ENCODE measurements at regions of chr5 and their contacts with region 1.

Region 1: GRCh38 chr5:122192497-122193496 is 63.5 kb downstream of the ZNF474 start:
- DNase-seq: peak; percentile 22
- H3K4me3 ChIP-seq: no peak overlapping the region
- H3K27ac ChIP-seq: no peak overlapping the region; a peak in 1 of 4 replicates
- H3K4me1 ChIP-seq: peaks cover 0 to 6% of the 10 kb centered on the region in 2 experiments; a peak in 2 of 4 replicates
- H3K27me3 ChIP-seq: no peaks in the 10 kb centered on the region
- CTCF ChIP-seq: peak; percentile 69
- EP300 ChIP-seq: no peak
- RAD21 ChIP-seq: peak; percentile 79

Region 2: GRCh38 chr5:122415030-122415800 is 222.4 kb after region 1 on chr5:
- CTCF ChIA-PET with region 1: interaction called, 212 read pairs
- POLR2A ChIA-PET with region 1: no interaction called
- DNase-seq: peak; percentile 55
- H3K4me3 ChIP-seq: no peak overlapping the region
- H3K27ac ChIP-seq: no peak overlapping the region; a peak in 1 of 4 replicates
- H3K4me1 ChIP-seq: peaks cover 0 to 6% of the 10 kb centered on the region in 2 experiments; a peak in 1 of 4 replicates
- H3K27me3 ChIP-seq: no peaks in the 10 kb centered on the region
- CTCF ChIP-seq: peak; percentile 62
- EP300 ChIP-seq: no peak
- RAD21 ChIP-seq: peak; percentile 98

Region 3: GRCh38 chr5:122421374-122422079 is 228.7 kb after region 1 on chr5:
- CTCF ChIA-PET with region 1: interaction called, 212 read pairs
- POLR2A ChIA-PET with region 1: no interaction called
- DNase-seq: no peak
- H3K4me3 ChIP-seq: no peak overlapping the region
- H3K27ac ChIP-seq: no peak overlapping the region; a peak in 1 of 4 replicates
- H3K4me1 ChIP-seq: peaks cover 0 to 7% of the 10 kb centered on the region in 2 experiments; a peak in 1 of 4 replicates
- H3K27me3 ChIP-seq: no peaks in the 10 kb centered on the region
- CTCF ChIP-seq: no peak
- EP300 ChIP-seq: no peak
- RAD21 ChIP-seq: no peak

Region 4: DNA sequence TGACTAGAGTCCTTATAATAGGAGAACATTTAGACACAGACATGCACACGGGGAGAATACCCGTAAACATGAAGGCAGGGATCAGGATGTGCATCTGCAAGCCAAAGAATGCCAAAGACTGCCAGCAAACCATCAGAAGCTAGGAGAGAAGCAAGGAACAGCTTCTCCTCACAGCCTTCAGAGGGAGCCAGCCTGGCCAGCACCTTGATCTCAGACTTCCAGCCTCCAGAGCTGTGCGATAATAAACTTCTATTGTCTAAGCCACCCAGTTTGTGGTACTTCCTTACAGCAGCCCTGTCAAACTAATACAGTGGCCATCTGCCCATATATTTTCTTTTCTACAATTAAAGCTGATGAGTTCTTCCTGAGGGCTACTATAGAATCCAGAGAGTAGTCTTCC is 254.2 kb after region 1 on chr5:
- CTCF ChIA-PET with region 1: interaction called, 13 read pairs
- POLR2A ChIA-PET with region 1: no interaction called
- DNase-seq: no peak
- H3K4me3 ChIP-seq: no peak overlapping the region
- H3K27ac ChIP-seq: no peak overlapping the region
- H3K4me1 ChIP-seq: peaks cover 0 to 2% of the 10 kb centered on the region in 2 experiments; a peak in 1 of 4 replicates
- H3K27me3 ChIP-seq: no peaks in the 10 kb centered on the region
- CTCF ChIP-seq: no peak
- EP300 ChIP-seq: no peak
- RAD21 ChIP-seq: no peak

Region 5: GRCh38 chr5:122500245-122501075 is 307.7 kb after region 1 on chr5:
- CTCF ChIA-PET with region 1: interaction called, 226 read pairs
- POLR2A ChIA-PET with region 1: no interaction called
- DNase-seq: peak; percentile 59
- H3K4me3 ChIP-seq: no peak overlapping the region; a peak in 1 of 4 replicates
- H3K27ac ChIP-seq: no peak overlapping the region
- H3K4me1 ChIP-seq: peaks cover 0 to 8% of the 10 kb centered on the region in 2 experiments; a peak in 2 of 4 replicates
- H3K27me3 ChIP-seq: no peaks in the 10 kb centered on the region
- CTCF ChIP-seq: peak; percentile 65
- EP300 ChIP-seq: no peak
- RAD21 ChIP-seq: peak; percentile 85